ENCODE measurements at regions of chr10 and their contacts with region 1.

Region 1: DNA sequence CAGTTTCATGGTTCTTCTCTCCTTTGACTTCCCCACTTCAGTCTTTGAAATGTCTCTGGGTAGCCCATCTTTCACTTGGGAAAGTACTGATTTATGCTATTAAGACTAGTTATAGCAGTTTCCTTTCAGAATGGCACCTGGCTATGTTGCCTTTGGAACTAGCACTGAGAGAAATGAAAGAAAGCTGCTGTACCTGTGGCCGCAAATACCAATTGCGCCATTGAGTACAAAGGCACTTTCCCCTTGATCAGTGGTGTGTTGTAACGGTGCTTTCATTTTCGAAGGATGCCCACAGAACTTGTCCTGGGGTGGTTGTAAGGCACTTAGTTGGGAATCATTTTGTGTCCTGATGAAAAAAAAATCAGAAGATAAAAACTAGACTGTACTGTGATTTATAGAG is 16.8 kb downstream of the BUB3 start:
- DNase-seq: no peak
- ATAC-seq: no peak
- H3K4me3 ChIP-seq: no peak overlapping the region
- H3K27ac ChIP-seq: no peak overlapping the region
- H3K4me1 ChIP-seq: no peaks in the 10 kb centered on the region
- H3K27me3 ChIP-seq: no peaks in the 10 kb centered on the region
- CTCF ChIP-seq: no peak

Region 2: GRCh38 chr10:122068844-122069243 is 1102.1 kb before region 1 on chr10:
- intact Hi-C with region 1: loop called in 1 of 10 experiments (anchors 5 kb)
- DNase-seq: no peak
- ATAC-seq: peak in 1 of 8 donors; percentile 39
- H3K4me3 ChIP-seq: no peak overlapping the region
- H3K27ac ChIP-seq: no peak overlapping the region
- H3K4me1 ChIP-seq: peaks cover 0 to 41% (median 7%) of the 10 kb centered on the region in 9 donors
- H3K27me3 ChIP-seq: no peaks in the 10 kb centered on the region
- CTCF ChIP-seq: no peak

Region 3: DNA sequence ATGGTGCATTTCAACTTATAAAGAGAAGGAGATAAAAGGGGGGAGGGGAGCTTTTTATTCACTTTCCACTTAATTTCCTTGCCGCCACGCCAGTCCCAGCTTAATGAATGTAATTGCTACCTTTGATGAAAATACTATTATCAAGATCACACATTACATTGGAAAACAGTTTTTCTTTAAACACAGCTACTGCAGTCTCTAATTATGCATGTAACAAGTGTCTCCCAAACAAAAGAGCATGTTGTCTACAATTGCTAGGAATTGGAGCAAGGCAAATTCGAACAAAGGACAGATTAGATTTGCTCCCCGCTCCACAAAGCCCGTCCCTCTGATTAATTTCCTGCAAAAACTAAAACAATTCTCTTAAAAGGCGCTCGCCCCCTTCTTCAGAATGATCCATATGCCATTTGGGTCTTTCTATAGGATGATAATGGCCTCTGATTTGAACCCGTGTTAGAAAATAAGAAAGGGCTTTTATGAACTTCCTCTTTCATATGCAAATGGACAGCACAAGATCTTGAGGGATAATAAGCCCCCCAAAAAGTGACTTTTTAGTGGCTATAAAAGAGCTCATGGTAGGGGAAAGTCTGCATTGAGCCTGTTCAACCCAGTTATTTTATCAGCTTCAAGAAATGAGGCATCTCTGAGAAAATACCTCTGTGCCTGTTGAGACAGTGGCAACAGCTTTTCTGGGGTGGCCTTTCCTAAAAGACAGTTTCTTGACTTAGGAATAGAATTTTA is 101.5 kb before region 1 on chr10:
- intact Hi-C with region 1: no loop called
- DNase-seq: no peak
- ATAC-seq: no peak
- H3K4me3 ChIP-seq: no peak overlapping the region
- H3K27ac ChIP-seq: no peak overlapping the region
- H3K4me1 ChIP-seq: no peaks in the 10 kb centered on the region
- H3K27me3 ChIP-seq: peaks cover 0 to 37% (median 22%) of the 10 kb centered on the region in 7 donors
- CTCF ChIP-seq: no peak

Measured in heart right ventricle (tissue), 16 donors.